ENCODE measurements at regions of chr14 and their contacts with region 1.

Region 1: DNA sequence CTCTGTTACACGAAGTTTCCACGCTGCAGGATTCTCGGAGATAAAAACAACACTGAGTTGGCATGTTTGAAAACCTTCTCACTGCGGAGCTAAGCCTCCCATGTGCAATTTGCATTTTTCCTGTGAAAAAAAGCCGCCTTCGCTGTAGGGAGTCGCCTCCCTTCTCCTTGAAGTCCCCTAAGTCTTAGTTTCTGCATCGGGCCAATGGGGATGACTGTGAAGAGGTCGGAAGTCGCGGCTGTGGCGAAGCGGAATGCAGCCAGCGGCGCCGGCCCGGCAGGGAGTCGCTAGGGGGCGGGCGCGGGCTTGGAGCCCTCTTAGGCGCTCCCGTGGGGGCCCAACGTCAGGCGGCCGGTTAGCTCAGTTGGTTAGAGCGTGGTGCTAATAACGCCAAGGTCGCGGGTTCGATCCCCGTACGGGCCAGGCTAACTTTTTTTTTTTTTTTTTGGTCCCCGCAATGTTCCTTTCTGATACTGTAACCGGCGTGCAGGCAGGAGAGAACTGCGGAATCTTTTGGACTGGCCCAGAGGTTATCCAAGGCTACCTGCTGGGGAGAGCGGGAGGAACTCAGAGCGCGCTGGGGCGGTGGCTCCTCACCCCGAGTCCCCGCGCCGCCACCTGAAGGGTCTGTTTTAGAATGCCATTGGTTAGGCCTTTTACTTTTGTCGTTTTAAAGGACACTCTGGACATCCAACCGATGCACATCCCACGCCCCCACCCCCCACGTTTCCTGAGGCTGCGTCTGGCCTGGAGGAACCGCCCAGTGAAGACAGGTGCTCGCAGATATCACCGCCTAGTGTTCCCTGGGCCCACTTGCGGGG is 2.6 kb upstream of the ZNF839 start:
- DNase-seq: peak; percentile 92 to 94
- ATAC-seq: peak; percentile 78 to 89 (median 83)
- H3K4me3 ChIP-seq: peak overlapping the region; percentile 29 to 76 (median 60)
- H3K27ac ChIP-seq: peak overlapping the region; percentile 30 to 98 (median 92)
- H3K4me1 ChIP-seq: peaks cover 0 to 61% (median 51%) of the 10 kb centered on the region in 9 donors
- H3K27me3 ChIP-seq: no peaks in the 10 kb centered on the region
- CTCF ChIP-seq: peak; percentile 57 to 93 (median 87)

Region 2: GRCh38 chr14:101964297-101965144 is 352.4 kb before region 1 on chr14 and contains the start of gene DYNC1H1:
- intact Hi-C with region 1: loop called in 3 of 10 experiments (anchors 5 to 10 kb)
- DNase-seq: peak; percentile 93 to 97
- ATAC-seq: peak; percentile 90 to 96 (median 92)
- H3K4me3 ChIP-seq: peak within 1 kb of the TSS; percentile 83 to 100 (median 99)
- H3K27ac ChIP-seq: peak within 1 kb of the TSS; percentile 91 to 98 (median 97)
- H3K4me1 ChIP-seq: peaks cover 6 to 71% (median 54%) of the 10 kb centered on the region in 9 donors
- H3K27me3 ChIP-seq: no peaks in the 10 kb centered on the region
- CTCF ChIP-seq: no peak
- total RNA-seq, gene DYNC1H1: 413 to 777 (median 634) TPM

Region 3: GRCh38 chr14:102063091-102063802 is 253.7 kb before region 1 on chr14:
- intact Hi-C with region 1: loop called in 1 of 10 experiments (anchors 10 kb)
- DNase-seq: peak; percentile 88 to 89
- ATAC-seq: peak; percentile 88 to 97 (median 96)
- H3K4me3 ChIP-seq: no peak overlapping the region
- H3K27ac ChIP-seq: peak overlapping the region in 1 of 10 donors; percentile 30
- H3K4me1 ChIP-seq: peaks cover 0 to 19% (median 7%) of the 10 kb centered on the region in 9 donors
- H3K27me3 ChIP-seq: no peaks in the 10 kb centered on the region
- CTCF ChIP-seq: peak in 8 of 9 donors; percentile 24 to 71 (median 58)

Region 4: GRCh38 chr14:102139248-102140026 is 177.5 kb before region 1 on chr14 and contains the start of gene WDR20:
- intact Hi-C with region 1: loop called in 3 of 10 experiments (anchors 5 kb)
- DNase-seq: peak; percentile 98 to 99
- ATAC-seq: peak; percentile 99 to 100 (median 99)
- H3K4me3 ChIP-seq: peak within 1 kb of the TSS; percentile 71 to 100 (median 94)
- H3K27ac ChIP-seq: peak within 1 kb of the TSS; percentile 42 to 94 (median 84)
- H3K4me1 ChIP-seq: peaks cover 6 to 37% (median 30%) of the 10 kb centered on the region in 9 donors
- H3K27me3 ChIP-seq: no peaks in the 10 kb centered on the region
- CTCF ChIP-seq: no peak
- total RNA-seq, gene WDR20: 19.0 to 28.0 (median 20.6) TPM

Region 5: DNA sequence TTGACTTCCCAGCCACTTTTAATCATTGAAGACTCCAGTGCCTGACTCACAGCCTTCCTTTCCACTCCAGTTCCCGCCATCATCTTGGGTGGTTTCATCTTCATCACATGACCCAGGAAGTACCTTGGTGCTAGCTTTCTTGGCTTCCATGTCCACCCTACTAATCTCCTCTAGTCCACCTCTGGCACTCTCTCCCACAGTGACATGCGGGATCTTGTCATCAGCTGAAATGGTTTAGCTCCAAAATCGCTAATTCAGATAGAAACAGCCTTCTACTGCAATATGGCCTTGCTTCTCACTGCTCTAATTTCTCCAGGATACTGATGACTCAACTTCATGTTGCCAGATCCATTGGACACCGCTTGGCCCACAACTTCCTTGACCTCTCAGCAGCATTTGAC is 152.7 kb before region 1 on chr14:
- intact Hi-C with region 1: no loop called
- DNase-seq: no peak
- ATAC-seq: peak in 7 of 8 donors; percentile 40 to 73 (median 59)
- H3K4me3 ChIP-seq: no peak overlapping the region
- H3K27ac ChIP-seq: no peak overlapping the region
- H3K4me1 ChIP-seq: peaks cover 7 to 54% (median 39%) of the 10 kb centered on the region in 9 donors
- H3K27me3 ChIP-seq: no peaks in the 10 kb centered on the region
- CTCF ChIP-seq: no peak

Region 6: DNA sequence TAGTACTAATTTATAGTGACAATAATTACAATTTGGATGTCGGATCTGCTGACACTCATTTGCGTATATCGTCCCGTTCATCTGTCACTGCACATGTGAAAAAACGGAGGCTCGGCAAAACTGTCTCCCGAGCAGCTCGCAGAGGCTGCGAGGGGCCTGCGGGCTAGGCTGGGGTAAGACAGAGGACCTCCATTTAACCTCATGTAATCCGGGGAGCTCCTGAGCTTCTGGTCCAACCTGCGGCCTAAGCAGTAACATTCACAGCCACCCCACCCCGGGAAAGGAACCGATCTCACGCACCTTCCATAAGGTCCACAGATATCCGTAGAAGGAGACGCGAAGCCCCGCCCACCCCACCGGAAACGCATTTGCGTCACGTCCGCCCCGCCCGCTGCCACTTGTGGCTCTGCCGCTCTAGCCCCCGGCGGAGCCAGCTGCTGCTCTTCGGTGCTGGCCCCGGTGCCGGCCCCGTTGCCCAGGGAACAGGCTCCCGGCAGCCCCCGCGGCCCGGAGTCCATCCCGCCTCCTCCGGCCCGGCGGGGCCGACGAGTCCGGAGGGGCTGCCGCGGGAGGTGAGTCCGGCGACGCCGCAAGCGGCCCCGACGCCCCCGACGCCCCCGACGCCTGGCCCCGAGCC is 45.7 kb after region 1 on chr14 and contains the starts of genes CINP and TECPR2:
- intact Hi-C with region 1: loop called in 1 of 10 experiments (anchors 5 kb)
- DNase-seq: peak; percentile 98 to 99
- ATAC-seq: peak; percentile 98 to 100 (median 99)
- H3K4me3 ChIP-seq: peak within 1 kb of the TSS; percentile 64 to 95 (median 86)
- H3K27ac ChIP-seq: peak within 1 kb of the TSS; percentile 68 to 96 (median 94)
- H3K4me1 ChIP-seq: peaks cover 0 to 41% (median 25%) of the 10 kb centered on the region in 9 donors
- H3K27me3 ChIP-seq: no peaks in the 10 kb centered on the region
- CTCF ChIP-seq: no peak
- total RNA-seq, gene CINP: 26.6 to 36.7 (median 31.0) TPM
- total RNA-seq, gene TECPR2: 20.1 to 34.2 (median 25.3) TPM

Region 7: DNA sequence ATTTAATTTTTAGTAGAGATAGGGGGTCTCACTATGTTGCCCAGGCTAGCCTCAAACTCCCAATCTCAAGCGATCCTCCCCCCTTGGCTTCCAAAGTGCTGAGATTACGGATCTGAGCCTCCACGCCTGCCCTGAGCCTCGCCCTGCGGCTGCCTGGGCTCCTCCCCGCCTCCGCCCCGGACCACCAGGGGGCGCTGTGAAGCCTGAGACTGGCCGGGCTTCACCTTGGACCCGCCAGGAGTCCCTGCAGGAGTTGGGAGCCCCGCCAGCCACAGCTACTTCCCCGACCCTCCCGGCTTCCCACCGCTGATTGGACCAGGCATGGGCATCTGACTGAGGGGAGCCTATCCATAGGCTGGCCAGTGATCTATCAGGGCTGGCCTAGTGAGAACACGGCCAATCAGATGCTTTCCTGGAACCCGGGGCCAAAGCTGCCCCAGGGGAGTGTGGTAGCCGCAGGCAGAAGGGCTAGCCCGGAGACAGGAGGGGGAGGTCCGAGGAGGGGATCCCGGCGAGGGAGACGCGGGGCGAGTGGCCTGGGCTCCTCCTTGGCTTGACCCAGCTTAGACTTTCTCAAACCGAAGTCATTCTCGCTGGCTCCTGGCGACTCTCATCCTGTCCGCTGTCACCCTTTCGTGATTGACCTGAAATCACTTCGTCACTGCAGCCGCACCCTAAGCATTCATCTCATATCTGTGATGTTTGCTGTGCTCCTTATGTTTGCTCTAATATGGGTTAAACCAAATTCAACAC is 207.7 kb after region 1 on chr14:
- intact Hi-C with region 1: loop called in 3 of 10 experiments (anchors 2 to 10 kb)
- DNase-seq: peak; percentile 99 to 100
- ATAC-seq: peak; percentile 98 to 100 (median 99)
- H3K4me3 ChIP-seq: peak overlapping the region; percentile 29 to 81 (median 64)
- H3K27ac ChIP-seq: peak overlapping the region; percentile 42 to 93 (median 86)
- H3K4me1 ChIP-seq: peaks cover 0 to 28% (median 10%) of the 10 kb centered on the region in 9 donors
- H3K27me3 ChIP-seq: no peaks in the 10 kb centered on the region
- CTCF ChIP-seq: peak; percentile 93 to 100 (median 99)

Region 8: DNA sequence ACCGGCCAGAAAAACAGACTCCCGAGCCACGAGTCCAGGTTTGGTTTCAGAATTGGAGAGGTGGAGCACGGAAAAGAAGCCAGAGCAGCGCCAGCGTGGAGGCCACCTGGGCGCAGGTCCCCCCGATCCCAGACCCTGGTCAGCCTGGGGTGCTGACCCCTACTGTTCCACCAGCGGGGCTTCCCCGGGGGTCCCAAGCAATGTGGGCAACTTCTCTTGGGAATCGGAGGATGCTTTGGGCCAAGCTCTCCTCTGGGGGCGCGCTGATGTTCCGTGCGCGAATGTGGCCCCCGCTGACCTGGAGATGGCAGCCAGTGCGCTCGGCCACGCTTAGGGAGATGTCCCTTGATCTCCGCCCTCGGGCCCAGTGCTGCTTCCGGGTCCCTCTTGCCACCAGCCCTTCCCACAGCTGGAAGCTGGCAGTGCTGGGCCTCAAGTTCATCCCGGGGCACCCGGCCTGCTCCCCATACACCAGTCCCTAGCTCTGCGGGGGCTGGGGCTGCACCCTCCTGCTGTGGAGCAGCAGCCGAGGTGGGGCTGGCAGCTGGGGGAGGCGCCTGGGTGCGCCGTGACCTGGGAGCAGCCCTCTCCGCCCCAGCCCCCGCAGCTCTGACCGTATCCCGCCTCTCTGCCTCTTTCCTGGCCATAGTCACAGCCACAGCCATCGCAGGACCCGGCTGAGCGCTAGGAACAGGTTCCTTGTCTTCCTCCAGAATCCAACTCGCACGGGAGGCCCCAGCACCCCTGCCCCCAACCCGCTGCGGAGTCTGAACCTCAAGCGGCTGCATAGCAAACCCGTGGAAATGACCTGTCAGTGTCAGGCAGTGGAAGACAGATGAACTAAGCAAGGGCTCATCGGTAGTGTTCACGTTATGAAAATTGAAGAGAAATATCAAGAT is 366.7 kb after region 1 on chr14:
- intact Hi-C with region 1: no loop called
- DNase-seq: no peak
- ATAC-seq: peak in 2 of 8 donors; percentile 16 to 61
- H3K4me3 ChIP-seq: no peak overlapping the region
- H3K27ac ChIP-seq: no peak overlapping the region
- H3K4me1 ChIP-seq: peaks cover 0 to 13% (median 0%) of the 10 kb centered on the region in 9 donors
- H3K27me3 ChIP-seq: no peaks in the 10 kb centered on the region
- CTCF ChIP-seq: no peak

Measured in heart right ventricle (tissue), 16 donors.